HEK293T (cell line): ENCODE measurements at regions of chr10 and their contacts with region 1.

Region 1: DNA sequence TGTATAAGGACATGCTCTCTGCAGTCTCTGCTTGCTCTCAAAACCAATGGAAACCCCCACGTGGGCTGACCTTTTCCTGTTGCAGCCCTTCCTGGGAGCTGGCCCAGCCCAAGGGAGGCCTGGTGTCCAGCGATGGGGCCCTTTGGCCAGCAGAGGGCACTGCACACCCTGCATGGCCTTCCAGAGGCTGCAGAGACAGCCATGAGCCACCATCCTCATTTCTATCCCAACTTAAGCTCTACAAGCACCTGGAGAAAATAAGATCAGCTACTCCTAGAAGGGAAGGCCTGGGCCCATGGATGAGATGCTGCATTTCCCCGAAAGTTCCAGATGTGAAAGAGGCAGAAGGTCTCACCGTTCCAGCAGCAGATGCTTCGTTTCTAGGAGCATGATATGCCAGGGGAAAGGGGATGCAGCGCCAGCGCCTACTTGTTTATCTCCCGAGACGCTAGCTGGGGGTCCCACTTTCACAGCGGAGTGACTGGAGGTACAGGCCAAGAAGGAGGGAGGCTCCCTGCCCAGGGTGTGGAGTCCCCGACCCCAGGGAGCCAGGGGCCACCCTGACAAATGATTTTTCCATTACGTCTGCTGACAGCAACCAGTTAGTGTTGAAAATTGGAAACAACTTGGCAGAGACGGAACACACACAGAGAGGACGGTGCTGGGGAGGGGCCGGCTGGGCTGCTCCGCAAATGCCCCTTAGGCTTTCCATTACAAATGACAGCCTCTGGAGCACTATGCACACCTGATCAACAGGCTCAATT is 106.4 kb downstream of the ZRANB1 start:
- DNase-seq: peak; percentile 92

Region 2: DNA sequence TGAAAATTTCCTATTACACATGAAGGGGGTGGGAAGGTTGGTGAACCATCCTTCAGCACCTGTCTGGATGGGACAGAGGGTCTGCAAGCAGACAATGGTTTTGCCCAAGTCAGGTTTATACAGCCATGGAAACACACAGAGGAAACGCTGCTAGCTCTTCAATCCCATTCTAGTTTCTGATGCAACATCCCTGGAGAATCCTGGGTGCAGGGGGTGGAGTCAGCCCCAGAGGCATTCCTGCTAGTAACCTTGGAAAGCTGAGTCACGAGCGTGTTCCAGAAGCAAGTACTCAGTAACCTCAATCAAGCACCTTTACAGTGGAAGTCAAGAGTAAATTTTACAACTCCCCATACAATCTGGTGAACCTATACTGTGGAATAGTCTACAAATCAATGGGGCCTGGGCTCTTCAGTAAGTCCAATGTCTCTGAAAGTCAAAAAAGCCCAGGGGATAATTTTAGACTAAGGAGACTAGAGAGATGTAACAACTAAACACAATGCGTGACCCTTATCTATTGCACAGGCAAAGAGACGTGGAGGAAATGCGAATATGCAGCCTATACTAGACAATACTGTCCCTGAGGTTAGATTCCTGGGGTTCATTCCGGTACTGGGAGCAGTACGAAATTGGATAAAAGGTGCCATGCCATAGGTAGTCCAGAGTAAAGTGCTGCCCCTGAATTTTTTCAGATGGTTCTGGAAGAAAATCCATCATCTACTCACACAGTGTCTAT is 11.0 kb before region 1 on chr10:
- CTCF ChIA-PET with region 1: interaction called, 17 read pairs
- POLR2A ChIA-PET with region 1: no interaction called
- DNase-seq: no peak

Region 3: DNA sequence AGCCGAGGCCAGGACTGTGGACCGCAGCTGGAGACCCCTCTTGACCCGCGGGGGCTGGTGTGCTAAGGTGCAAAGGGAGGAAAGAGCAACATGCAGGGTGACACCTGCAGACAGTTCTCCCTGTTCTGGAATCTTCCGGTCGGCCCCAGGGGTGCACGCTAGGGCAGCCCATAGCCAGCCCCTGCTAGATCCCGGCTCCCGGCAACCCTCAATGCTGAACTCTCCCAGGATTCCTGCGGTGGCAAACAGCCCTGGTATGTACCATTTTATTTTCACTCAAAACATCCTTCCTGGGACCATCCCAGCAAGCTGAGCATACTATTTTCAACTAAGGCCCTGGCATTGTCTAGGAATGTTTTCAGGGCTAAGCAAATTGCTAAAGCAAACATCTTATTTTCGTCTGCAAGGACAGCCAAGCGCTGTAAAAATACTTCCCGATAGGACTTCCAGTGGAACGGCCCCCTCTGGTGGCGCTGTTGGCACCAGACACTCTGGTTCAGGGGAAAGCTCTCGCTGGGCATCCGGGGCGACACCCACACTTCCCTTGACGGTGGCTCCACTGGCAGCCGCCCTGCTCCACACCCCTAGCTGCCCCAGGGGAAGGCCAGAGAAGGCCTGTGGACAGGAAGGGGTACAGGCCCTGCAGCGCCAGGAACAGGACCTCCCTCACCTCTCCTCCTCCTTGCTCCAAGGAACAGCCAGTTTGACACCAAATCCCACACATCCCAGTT is 12.7 kb after region 1 on chr10:
- CTCF ChIA-PET with region 1: interaction called, 22 read pairs
- POLR2A ChIA-PET with region 1: no interaction called
- DNase-seq: peak; percentile 73